GM13976 (cell line): ENCODE measurements at regions of chr11 and their contacts with region 1.

Region 1: DNA sequence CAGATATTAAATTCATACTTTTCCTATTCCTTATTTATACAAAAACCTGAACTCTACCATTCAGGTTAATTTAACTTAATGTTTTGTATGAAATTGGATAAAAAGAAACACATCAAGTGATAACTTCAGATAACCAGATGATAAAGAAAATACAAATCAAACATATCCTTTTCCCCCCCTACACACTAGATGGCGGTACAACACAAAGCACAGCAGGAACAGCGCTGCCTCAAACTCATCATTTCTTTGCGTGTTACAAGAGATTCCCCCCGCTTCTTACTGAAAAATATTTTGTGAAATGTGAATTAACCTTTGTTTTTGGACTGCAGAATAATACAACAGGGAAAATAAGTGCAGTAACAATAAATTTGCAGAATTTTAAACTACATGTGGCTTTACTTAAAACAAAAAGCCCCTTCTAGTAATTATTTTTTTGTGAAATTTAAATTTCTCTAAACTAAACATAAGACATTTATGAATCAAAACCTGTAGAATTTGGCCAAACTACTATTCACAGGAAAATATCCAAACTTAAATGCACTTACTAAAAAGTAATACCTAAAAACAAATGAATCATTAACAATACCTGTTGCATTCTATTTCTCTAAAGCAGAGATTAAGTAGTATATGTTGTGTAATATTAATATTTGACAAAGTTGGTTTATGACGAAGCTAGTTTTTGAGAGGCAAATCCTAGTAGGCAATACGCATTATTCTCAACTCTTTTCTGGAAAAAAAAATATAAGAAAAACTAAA is 74.4 kb downstream of the ARHGAP32 start:
- DNase-seq: peak; percentile 33
- CTCF ChIP-seq: peak; percentile 78

Region 2: DNA sequence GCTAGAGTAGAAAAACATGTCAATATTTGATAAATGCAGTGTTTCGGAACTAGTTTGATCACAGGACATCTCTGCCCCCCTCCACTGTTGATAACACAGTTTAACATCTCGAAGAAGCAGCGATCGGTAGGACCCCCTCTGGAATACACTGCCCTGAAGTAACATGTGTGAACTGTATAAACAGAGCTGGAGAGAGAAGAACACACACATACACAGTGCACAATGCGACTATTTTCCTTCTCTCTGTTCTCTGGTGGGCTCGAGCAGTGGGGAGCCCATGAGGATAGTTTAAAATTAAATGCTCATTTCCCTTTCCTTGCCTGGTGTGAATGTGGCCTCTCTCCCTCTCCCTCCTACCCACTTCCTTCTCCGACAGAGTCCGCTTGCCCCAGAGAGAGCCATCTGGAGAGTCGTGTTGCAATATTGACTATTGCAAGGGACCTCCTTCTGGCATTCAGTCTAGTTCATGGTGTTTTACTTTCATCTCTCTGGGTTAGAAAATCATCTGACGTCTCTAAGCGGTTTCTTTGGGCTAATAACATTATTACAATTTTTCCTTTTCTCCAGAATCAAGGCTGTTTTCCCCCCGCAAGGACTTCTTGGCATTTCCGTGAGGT is 206.2 kb after region 1 on chr11:
- in situ Hi-C with region 1: loop called (anchors 25 kb)
- DNase-seq: no peak
- CTCF ChIP-seq: no peak

Region 3: GRCh38 chr11:129593098-129593497 is 475.3 kb after region 1 on chr11:
- in situ Hi-C with region 1: no loop called
- DNase-seq: no peak
- CTCF ChIP-seq: no peak

Region 4: DNA sequence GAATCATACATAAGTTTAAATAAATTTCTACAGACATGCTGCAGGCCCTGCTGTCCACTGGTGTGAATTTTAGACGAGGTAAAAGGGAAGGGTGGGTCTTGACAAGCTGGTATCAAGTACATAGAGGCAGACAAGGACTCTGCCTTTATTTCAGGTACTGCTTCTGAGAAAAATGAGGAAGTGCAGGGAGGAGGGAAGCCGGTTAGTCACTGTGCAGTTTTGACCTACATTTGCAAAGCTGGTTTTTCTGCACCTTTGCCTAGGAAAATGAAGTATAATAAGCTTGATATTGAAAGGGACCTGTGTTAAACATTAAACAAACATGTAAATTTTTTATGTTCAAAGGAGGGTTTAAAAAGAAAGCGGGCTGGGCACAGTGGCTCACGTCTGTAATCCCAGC is 722.5 kb after region 1 on chr11:
- in situ Hi-C with region 1: no loop called
- DNase-seq: no peak
- CTCF ChIP-seq: no peak